Caco-2 (cell line): ENCODE measurements at regions of chr14 and their contacts with region 1.

Region 1: DNA sequence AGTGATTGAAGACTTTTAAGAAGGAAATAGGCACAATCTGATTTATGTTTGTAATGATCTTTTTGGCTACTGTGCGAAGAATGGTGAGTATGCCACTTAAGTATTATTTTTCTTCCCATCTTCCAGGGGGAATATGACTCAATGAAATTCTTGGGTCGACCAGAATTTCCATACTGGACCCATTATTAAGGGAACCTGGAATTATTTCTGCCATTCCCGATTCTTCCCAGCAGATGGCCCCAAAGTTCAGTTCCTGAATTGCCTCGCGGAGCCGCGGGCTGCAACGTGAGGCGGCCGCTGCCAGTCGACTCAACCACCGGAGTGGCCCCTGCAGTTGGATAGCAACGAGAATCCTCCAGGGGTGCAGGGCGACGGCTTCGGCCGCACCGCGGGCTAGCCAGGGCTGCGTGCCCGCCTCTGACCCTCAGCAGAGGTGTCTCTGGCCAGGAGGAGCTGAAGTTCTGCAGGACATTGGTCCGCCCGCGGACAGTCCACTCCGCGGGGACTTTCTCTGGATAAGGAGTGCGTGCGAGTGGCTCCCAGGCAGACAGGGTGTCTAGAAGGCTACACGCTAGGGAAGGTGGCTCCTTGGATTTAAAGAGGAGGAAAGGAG is 628 bp upstream of the TSHR start:
- DNase-seq: peak; percentile 76 to 85
- H3K4me3 ChIP-seq: peak overlapping the region; percentile 45
- H3K4me3 Mint-ChIP-seq: peak overlapping the region; percentile 73
- H3K27ac Mint-ChIP-seq: no peak overlapping the region
- H3K4me1 ChIP-seq: 0 out of 2 replicates have a peak, but pooled peaks cover 4% of the 10 kb centered on the region
- H3K4me1 Mint-ChIP-seq: no peaks in the 10 kb centered on the region
- H3K27me3 ChIP-seq: peaks cover 4% of the 10 kb centered on the region
- H3K27me3 Mint-ChIP-seq: peaks cover 32% of the 10 kb centered on the region
- CTCF ChIP-seq: peak; percentile 74 to 79

Region 2: DNA sequence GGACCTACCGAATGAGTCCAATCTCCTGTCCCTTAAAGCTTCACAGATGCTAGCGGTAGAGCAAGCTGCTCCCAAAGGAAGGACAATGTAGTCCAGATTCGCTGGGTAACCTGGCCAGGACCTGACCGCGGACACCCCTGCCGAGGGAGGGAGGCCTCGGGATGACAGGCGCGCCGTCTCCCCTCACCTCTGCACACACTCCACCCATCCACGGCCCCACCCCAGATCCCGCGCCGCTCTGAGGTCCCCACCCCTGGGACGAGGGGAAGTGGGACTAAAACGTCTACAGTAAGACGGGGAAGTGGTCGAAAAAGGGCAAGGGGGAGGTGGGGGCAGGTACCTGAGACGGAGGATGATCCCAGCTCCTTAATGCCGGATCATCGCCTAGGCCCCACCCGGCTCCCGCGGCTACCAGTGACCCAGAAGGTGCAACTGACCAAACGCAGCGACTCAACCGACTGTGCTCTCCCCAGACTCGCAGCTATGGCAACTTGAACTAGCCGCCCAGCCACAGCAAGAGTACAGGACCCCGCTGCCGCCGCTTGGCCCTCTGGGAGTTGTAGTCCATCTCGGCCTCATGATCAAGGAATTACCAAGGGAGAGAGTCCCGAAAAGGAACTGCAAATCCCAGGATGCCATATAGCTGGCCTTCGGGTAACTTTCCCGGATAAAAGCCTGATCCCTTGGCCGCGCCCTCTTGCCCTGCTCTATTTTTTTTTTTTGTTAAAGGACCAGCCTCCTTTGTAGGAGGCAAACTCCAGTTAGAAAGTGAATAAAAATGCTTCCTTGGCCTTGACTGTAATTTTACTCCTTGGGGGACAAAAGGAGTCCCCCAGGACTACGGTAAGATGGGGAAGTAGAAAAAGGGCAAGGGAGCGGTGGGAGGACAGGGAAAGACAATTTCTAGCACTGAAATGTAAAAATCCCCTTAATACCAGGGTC is 13.3 kb before region 1 on chr14 and contains the start of gene CEP128:
- CTCF ChIA-PET with region 1: interaction called, 3 read pairs
- POLR2A ChIA-PET with region 1: no interaction called
- intact Hi-C with region 1: loop called (anchors 1 kb)
- DNase-seq: peak; percentile 96 to 97
- H3K4me3 ChIP-seq: peak within 1 kb of the TSS; percentile 81
- H3K4me3 Mint-ChIP-seq: peak within 1 kb of the TSS; percentile 88
- H3K27ac Mint-ChIP-seq: peak within 1 kb of the TSS; percentile 86
- H3K4me1 ChIP-seq: peaks cover 9% of the 10 kb centered on the region
- H3K4me1 Mint-ChIP-seq: peaks cover 7% of the 10 kb centered on the region
- H3K27me3 ChIP-seq: no peaks in the 10 kb centered on the region
- H3K27me3 Mint-ChIP-seq: no peaks in the 10 kb centered on the region
- CTCF ChIP-seq: no peak
- total RNA-seq, gene CEP128: 16.7 and 22.6 TPM in 2 replicates

Region 3: DNA sequence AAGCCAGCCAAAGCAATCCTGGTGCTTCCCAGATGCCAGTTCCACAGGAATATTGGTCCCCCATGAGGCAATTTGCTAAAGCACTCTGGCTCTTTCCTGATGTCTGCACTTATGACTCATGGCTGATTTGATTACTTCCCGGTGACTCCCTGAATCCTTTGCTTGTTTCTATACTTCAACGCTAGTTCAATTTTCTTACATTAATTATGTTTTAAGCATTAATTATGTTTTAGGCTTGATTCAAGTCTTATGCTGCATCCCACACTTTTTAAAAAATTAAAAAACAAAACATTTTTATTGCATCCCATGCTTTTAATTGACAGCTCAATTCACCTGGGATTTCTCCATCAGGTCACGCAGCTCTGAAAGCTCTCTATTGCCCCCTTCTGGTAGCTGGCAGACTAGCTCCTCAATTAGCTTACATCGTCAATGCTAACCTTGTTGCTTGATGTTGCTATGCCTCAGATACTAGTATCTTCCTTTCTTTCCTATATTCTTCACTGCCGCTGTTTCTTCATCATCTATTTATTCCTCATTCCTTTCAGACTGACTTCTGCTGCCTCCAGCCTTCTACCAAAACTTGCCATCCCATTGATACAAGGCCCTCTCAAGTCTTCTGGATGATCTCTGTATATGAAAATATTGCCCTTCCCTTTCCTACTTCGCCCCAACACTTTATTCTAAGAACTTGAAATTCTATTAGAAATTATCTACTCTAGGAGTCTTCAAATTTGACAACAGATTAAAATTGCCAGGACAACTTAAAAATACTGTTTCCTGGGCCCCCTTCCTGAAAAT is 32.6 kb after region 1 on chr14:
- CTCF ChIA-PET with region 1: interaction called, 36 read pairs
- POLR2A ChIA-PET with region 1: no interaction called
- intact Hi-C with region 1: loop called (anchors 1 kb)
- DNase-seq: peak; percentile 57 to 74
- H3K4me3 ChIP-seq: no peak overlapping the region
- H3K4me3 Mint-ChIP-seq: no peak overlapping the region
- H3K27ac Mint-ChIP-seq: no peak overlapping the region
- H3K4me1 ChIP-seq: no peaks in the 10 kb centered on the region
- H3K4me1 Mint-ChIP-seq: no peaks in the 10 kb centered on the region
- H3K27me3 ChIP-seq: no peaks in the 10 kb centered on the region
- H3K27me3 Mint-ChIP-seq: peaks cover 10% of the 10 kb centered on the region
- CTCF ChIP-seq: peak; percentile 81 to 92

Region 4: GRCh38 chr14:81062816-81063215 is 108.0 kb after region 1 on chr14:
- CTCF ChIA-PET with region 1: no interaction called
- POLR2A ChIA-PET with region 1: no interaction called
- intact Hi-C with region 1: loop called (anchors 1 kb)
- DNase-seq: peak in 1 of 2 experiments; percentile 41
- H3K4me3 ChIP-seq: no peak overlapping the region
- H3K4me3 Mint-ChIP-seq: no peak overlapping the region
- H3K27ac Mint-ChIP-seq: no peak overlapping the region
- H3K4me1 ChIP-seq: no peaks in the 10 kb centered on the region
- H3K4me1 Mint-ChIP-seq: no peaks in the 10 kb centered on the region
- H3K27me3 ChIP-seq: no peaks in the 10 kb centered on the region
- H3K27me3 Mint-ChIP-seq: no peaks in the 10 kb centered on the region
- CTCF ChIP-seq: peak; percentile 25 to 57

Region 5: DNA sequence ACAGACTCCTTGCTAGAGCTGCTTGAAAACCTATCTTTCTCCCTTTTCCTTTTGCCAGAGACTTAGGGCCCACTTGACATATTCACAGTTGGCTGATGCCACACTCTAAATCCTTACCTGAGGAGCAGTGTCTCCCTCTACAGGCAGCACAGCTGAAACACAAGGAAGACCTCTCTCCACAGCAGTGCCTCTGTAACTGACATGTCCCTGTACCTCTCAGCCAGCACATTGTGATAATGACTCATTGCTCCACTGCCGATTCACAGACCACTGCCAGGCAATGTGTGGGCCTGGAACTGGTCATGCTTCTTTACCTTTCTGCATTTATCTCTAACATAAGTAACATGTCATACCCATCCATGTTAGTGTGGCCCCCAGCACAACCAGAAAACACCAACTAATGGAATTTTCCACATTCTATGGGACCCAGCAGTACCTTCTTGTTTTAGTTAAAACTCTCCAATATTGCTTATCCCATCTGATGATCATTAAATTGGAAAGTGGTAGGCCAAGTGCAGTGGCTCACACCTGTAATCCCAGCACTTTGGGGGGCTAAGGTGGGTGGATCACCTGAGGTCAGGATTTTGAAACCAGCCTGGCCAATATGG is 209.5 kb after region 1 on chr14:
- CTCF ChIA-PET with region 1: no interaction called
- POLR2A ChIA-PET with region 1: no interaction called
- intact Hi-C with region 1: loop called (anchors 1 kb)
- DNase-seq: peak; percentile 57 to 62
- H3K4me3 ChIP-seq: no peak overlapping the region
- H3K4me3 Mint-ChIP-seq: no peak overlapping the region
- H3K27ac Mint-ChIP-seq: no peak overlapping the region
- H3K4me1 ChIP-seq: no peaks in the 10 kb centered on the region
- H3K4me1 Mint-ChIP-seq: no peaks in the 10 kb centered on the region
- H3K27me3 ChIP-seq: no peaks in the 10 kb centered on the region
- H3K27me3 Mint-ChIP-seq: no peaks in the 10 kb centered on the region
- CTCF ChIP-seq: peak; percentile 43 to 61

Region 6: GRCh38 chr14:81170104-81170828 is 215.5 kb after region 1 on chr14:
- CTCF ChIA-PET with region 1: no interaction called
- POLR2A ChIA-PET with region 1: no interaction called
- intact Hi-C with region 1: loop called (anchors 1 kb)
- DNase-seq: peak; percentile 88 to 89
- H3K4me3 ChIP-seq: peak overlapping the region; percentile 64
- H3K4me3 Mint-ChIP-seq: peak overlapping the region; percentile 81
- H3K27ac Mint-ChIP-seq: peak overlapping the region; percentile 86
- H3K4me1 ChIP-seq: no peaks in the 10 kb centered on the region
- H3K4me1 Mint-ChIP-seq: no peaks in the 10 kb centered on the region
- H3K27me3 ChIP-seq: no peaks in the 10 kb centered on the region
- H3K27me3 Mint-ChIP-seq: no peaks in the 10 kb centered on the region
- CTCF ChIP-seq: peak; percentile 76 to 86

Region 7: GRCh38 chr14:81436296-81437138 is 481.7 kb after region 1 on chr14:
- CTCF ChIA-PET with region 1: no interaction called
- POLR2A ChIA-PET with region 1: no interaction called
- intact Hi-C with region 1: no loop called
- DNase-seq: peak; percentile 80 to 92
- H3K4me3 ChIP-seq: peak overlapping the region; percentile 79
- H3K4me3 Mint-ChIP-seq: peak overlapping the region; percentile 95
- H3K27ac Mint-ChIP-seq: peak overlapping the region; percentile 61
- H3K4me1 ChIP-seq: no peaks in the 10 kb centered on the region
- H3K4me1 Mint-ChIP-seq: peaks cover 27% of the 10 kb centered on the region
- H3K27me3 ChIP-seq: no peaks in the 10 kb centered on the region
- H3K27me3 Mint-ChIP-seq: no peaks in the 10 kb centered on the region
- CTCF ChIP-seq: no peak

Region 8: DNA sequence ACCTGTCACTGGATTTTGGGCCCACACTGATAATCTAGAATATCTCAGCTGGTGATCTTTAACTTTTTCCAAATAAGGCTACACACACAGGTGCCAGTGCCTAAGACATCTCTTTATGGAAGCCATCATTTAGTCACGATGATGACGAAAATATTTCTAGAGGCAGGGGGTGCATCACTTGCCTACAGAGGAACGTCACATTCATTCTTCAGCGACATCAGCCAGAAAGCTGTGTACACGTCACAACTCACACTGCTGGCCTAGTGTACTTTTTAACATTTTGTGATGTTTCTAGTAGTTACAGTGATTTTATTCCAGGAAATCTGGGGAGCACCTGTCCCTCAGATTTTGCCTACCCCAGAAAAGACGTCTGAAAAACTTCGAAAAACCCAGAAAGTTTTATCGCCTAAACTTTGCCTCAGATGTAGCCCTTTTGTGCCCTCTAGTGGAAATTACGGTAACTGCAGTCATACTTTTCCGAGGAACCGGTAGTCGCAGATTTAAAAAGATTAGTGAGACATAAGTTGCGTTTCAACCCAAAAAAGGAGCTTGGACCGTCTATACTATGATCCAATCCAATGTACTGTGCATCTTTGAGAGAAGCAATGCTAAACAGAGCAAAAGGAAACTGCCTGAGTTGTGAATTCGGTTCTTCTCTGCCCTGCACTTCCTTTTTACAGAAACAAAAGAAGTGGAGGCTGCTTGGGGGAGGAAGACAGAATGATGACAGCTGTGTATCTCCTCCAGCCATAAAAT is 509.6 kb after region 1 on chr14:
- CTCF ChIA-PET with region 1: no interaction called
- POLR2A ChIA-PET with region 1: no interaction called
- intact Hi-C with region 1: loop called (anchors 10 kb)
- DNase-seq: peak in 1 of 2 experiments; percentile 74
- H3K4me3 ChIP-seq: peak overlapping the region; percentile 19
- H3K4me3 Mint-ChIP-seq: peak overlapping the region; percentile 55
- H3K27ac Mint-ChIP-seq: no peak overlapping the region
- H3K4me1 ChIP-seq: no peaks in the 10 kb centered on the region
- H3K4me1 Mint-ChIP-seq: no peaks in the 10 kb centered on the region
- H3K27me3 ChIP-seq: no peaks in the 10 kb centered on the region
- H3K27me3 Mint-ChIP-seq: no peaks in the 10 kb centered on the region
- CTCF ChIP-seq: peak; percentile 68 to 78